ENCODE measurements at regions of chr13 and their contacts with region 1.

Region 1: DNA sequence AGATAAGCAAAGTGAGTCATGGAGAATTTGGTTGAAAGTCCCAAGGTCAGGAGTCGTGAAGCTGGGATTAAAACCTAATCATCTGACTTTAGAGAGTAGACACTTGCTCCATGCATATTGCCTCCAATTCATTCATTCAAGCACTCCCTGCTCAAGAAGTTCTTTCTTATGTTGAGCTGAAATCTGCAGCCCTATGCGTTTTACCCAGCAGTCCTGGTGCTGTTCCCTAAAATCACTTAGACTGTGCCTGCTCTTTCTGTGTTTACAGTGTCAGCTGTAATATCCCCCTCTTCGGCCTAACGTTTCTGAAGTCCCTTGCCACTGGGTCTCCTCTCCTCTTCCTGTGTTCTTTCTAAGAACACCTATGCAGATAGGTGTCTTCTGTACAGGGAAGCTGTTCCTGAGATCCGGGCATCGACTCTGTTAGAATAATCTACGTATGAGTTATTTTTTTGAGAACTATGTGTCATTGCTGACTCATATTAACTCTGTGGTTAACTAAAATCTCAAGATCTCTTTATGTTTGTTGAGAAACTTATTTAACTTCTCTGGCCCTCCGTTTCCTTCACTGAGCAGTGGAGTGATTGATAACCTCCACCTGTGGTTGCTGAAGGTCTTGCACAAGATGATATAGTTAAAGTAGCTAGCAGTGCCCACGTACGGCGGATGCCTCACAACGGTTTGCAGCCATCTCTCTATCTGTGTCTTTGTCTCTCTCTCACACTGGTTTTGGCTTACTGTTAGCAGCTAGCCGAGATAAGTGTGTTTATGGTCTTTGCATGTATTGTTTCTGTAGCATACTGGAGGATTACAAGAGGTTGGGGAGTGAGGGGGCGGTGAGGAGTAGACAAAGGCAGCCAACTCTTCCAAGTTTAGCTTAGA is 4.7 kb downstream of the ALOX5AP start:
- DNase-seq: peak; percentile 68
- H3K4me3 Mint-ChIP-seq: peak overlapping the region; percentile 83
- H3K27ac Mint-ChIP-seq: peak overlapping the region; percentile 95
- H3K4me1 Mint-ChIP-seq: peaks cover 81% of the 10 kb centered on the region
- H3K27me3 Mint-ChIP-seq: peaks cover 2% of the 10 kb centered on the region

Region 2: DNA sequence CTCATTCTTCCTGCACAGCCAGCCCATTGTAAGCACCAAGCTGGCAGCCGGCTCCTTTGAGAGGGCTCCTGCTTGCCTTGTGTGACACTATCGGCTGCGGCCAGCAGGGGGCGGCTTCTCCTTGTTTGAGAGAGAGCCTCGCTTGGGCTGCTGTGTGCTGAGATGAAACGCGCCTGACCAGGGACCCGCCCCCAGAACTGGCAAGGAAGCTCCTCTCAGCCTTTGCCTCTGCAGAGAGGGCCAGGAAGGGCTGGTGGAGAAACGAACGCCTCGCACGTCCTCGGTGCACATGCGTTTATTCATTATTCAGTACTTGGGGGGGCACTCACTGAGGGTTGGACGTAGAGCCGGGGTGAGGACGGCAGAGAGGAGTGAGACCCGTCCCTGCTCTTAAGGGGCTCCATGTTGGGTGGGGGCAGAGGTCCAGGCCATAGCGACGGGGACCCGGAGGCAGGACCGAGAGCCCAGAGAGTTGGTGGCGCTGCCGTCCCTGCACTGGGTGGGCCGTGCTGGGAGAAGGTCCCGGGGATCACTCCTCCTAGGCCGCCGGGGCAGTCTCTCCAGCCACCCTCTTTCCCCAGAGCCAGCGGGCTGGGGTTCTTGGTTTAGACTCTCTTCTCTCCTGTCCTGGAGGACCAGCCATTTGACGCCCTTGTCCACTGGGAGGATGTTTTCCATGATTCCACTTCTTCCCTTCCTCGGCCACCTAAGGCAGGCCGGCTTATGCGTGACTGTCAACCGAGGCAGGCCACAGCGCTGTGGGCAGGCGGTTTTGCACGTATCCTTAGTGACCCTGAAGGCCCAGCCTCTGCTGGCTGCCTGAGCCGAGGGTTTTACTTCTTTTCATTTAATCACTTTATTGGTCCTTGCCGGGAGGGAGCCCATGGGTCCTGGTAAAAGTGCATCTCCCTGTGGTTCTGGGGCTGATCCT is 607.1 kb before region 1 on chr13:
- intact Hi-C with region 1: loop called (anchors 1 kb)
- DNase-seq: peak; percentile 92
- H3K4me3 Mint-ChIP-seq: no peak overlapping the region
- H3K27ac Mint-ChIP-seq: peak overlapping the region; percentile 67
- H3K4me1 Mint-ChIP-seq: peaks cover 18% of the 10 kb centered on the region
- H3K27me3 Mint-ChIP-seq: no peaks in the 10 kb centered on the region

Region 3: DNA sequence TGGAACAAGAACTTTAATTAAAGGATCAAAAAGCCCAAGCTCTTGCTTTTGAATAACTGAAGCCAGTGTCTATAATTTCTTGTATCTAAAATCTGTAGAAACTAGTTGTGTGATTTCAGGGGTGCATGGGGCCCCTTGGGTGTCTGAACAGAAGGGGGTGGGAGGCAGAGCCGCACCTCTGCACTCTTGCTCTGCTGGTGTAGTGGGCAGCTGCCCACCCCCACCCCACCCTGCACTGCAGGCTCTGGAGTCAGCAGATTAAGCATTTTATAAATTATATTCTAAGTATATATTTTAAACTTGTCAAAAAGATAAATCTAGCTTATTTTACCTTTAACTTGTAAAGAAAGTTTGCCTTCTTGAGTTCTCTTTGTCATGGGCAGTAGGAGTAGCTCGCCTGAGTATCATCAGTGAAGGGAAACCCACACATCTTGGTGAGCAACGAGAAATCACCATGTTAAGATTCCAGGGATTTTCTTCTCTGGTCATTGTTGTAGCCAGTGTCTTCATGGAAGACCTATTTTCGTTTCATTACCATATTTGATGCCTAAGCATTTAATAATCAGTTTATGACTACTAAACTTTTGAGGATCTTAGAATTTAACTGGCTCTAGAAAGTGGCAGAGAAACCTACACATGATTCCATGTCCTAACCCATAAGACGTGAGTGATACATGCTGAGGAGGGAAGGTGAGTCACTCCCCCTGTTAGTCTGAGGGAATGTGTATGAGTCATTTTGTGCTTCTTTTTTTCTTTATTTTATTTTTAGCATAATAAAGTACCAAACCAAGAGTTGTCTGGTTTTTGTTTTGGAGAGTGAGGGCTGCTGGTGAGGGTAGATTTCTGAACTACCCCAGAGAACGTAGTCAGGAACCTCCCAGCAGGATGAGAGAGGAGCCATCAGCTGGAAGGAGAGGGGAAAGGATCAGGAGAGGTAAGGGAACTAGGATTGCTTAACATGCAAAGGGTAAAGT is 310.0 kb before region 1 on chr13:
- intact Hi-C with region 1: loop called (anchors 2 kb)
- DNase-seq: no peak
- H3K4me3 Mint-ChIP-seq: peak overlapping the region; percentile 75
- H3K27ac Mint-ChIP-seq: peak overlapping the region; percentile 97
- H3K4me1 Mint-ChIP-seq: peaks cover 29% of the 10 kb centered on the region
- H3K27me3 Mint-ChIP-seq: peaks cover 6% of the 10 kb centered on the region

Region 4: DNA sequence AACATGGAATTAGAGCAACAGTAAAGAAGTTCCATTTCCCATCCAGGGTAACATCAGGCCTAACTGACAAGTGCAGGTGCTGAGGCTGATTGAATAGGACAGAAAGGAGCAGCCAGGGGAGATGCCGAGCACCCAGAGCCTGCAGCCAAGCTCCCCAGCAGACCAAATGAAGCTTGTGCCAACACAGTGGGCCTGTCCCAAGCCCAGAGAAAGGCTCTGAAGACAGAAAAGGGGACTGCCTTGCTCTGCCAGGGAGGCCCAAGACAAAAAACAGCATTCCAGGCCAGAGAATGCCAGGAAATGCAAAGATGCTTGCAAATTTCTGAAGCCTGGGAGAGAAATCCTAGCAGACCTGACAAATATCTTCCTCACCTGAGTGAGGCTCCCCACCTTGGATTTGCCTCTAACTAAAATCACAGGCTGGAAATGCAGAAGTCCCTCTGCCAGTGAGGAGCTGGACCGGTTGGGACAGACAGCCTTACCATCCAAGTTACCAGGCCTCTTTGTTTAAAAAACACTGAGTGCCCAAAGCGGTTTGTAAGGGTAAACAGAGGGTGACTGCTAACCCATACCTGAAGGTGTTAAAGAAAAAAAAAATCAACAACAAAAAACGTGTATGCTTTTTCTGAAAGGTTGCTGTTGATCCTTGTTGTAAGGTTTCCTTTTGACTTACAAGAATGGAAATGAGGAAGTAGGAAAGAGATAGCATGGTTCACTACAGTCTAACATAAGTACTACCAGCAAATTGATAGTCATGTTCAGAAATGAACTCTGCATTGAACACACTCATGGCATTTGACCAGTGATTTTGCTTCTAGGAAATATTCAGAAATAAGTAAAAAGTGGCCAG is 262.4 kb before region 1 on chr13:
- intact Hi-C with region 1: no loop called
- DNase-seq: no peak
- H3K4me3 Mint-ChIP-seq: no peak overlapping the region
- H3K27ac Mint-ChIP-seq: no peak overlapping the region
- H3K4me1 Mint-ChIP-seq: no peaks in the 10 kb centered on the region
- H3K27me3 Mint-ChIP-seq: peaks cover 9% of the 10 kb centered on the region

Region 5: GRCh38 chr13:30654430-30654829 is 85.6 kb before region 1 on chr13:
- intact Hi-C with region 1: loop called (anchors 1 kb)
- DNase-seq: peak; percentile 48
- H3K4me3 Mint-ChIP-seq: peak overlapping the region; percentile 68
- H3K27ac Mint-ChIP-seq: peak overlapping the region; percentile 89
- H3K4me1 Mint-ChIP-seq: peaks cover 43% of the 10 kb centered on the region
- H3K27me3 Mint-ChIP-seq: no peaks in the 10 kb centered on the region

Region 6: DNA sequence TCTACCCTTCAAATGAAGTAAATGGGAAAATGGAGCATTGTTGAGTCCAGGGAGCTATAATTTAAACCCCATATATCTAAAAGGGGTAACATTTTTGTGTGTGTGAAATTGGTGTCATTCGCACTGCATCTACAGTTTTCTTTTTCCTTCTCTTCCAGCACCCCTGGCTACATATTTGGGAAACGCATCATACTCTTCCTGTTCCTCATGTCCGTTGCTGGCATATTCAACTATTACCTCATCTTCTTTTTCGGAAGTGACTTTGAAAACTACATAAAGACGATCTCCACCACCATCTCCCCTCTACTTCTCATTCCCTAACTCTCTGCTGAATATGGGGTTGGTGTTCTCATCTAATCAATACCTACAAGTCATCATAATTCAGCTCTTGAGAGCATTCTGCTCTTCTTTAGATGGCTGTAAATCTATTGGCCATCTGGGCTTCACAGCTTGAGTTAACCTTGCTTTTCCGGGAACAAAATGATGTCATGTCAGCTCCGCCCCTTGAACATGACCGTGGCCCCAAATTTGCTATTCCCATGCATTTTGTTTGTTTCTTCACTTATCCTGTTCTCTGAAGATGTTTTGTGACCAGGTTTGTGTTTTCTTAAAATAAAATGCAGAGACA is 23.9 kb after region 1 on chr13:
- intact Hi-C with region 1: loop called (anchors 1 kb)
- DNase-seq: no peak
- H3K4me3 Mint-ChIP-seq: no peak overlapping the region
- H3K27ac Mint-ChIP-seq: no peak overlapping the region
- H3K4me1 Mint-ChIP-seq: peaks cover 24% of the 10 kb centered on the region
- H3K27me3 Mint-ChIP-seq: no peaks in the 10 kb centered on the region

Region 7: GRCh38 chr13:31044377-31045285 is 304.6 kb after region 1 on chr13:
- intact Hi-C with region 1: loop called (anchors 2 kb)
- DNase-seq: peak; percentile 78
- H3K4me3 Mint-ChIP-seq: peak overlapping the region; percentile 67
- H3K27ac Mint-ChIP-seq: peak overlapping the region; percentile 89
- H3K4me1 Mint-ChIP-seq: peaks cover 14% of the 10 kb centered on the region
- H3K27me3 Mint-ChIP-seq: peaks cover 2% of the 10 kb centered on the region

Measured in activated T-helper 1 cell treated with anti-CD3 and anti-CD28 coated beads, Interleukin-12 subunit alpha, Interleukin-12 subunit beta, Interleukin-2, Interleukin-4 antibody, amounts not matched to agents 30 ng/mL and 10 ng/mL and 1 ng/mL, durations not matched to agents 14 hours and 24 hours and 36 hours (primary cell).